HEK293 (cell line): ENCODE measurements at regions of chr11 and their contacts with region 1.

Region 1: DNA sequence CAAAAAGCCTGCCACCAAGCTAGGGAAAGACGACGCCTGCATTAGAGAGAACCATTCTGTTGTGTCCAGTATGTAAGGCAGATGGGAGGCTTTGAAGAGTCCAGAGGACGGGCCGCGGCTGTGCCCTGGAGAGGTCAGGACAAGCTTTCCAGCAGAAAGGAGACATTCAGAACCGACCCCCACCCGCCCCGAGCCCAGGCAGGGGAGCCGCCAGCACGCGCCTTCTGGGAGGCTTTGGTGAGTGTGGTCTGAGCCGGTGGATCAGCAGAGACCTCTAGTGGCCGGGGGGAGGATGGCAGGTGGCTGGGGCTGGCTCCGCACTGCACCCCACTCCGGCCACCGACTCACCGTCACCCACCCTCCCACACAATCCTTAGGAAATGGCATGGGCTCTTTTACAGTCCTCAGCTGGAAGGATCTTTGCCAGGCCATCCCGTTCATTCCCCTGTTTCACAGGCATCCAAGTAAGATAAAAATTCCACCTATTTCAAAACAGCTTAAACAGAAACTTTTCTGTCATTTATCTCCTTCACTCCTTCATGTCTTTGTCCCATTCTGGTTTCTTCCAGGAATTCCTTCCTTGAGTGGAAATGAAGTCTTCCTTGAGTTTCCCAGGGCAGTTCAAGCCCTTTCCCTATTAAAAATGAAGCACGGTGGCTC is 91.2 kb downstream of the FEZ1 start:
- H3K4me3 ChIP-seq: no peak overlapping the region
- H3K27ac ChIP-seq: no peak overlapping the region
- H3K4me1 ChIP-seq: no peaks in the 10 kb centered on the region
- CTCF ChIP-seq: peak; percentile 61

Region 2: DNA sequence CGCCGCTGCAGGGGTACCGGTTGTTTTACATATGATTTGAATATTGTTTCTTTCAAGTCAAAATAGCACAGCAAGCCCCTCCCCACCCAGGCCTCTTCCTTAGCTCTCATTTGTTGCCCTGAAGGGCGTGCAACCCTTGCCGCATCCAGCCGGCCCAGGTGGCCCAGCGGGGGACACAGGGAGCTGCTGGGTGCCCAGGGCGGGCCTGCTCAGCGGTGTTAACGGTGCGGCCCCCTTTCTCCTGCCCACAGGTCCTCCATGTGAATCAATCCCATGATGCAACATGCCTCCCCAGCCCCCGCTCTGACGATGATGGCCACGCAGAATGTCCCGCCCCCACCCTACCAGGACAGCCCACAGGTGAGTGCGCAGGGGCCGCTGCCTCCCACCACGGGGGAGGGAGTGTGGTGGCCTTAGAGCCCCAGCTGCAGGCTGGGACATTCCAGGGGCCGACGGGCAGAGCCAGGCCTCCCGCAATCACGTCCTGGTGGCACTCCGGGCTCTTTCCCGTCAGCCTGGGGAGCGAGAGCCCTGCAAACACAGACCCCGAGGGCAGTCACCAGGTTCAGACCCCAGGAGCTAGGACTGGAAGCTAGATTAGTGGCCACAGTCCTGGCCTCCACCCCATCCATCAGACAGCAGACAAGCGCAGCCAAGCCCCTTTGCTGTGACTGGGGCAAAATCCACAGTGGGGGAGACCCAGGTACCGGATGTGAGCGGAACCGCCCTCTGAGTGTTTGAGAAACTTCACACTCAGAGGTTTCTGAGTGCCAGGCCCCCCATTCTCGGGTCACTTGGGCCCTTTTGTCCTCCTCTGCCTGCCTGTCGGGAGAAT is 53.7 kb before region 1 on chr11:
- CTCF ChIA-PET with region 1: interaction called, 20 read pairs
- POLR2A ChIA-PET with region 1: no interaction called
- H3K4me3 ChIP-seq: no peak overlapping the region
- H3K27ac ChIP-seq: no peak overlapping the region
- H3K4me1 ChIP-seq: no peaks in the 10 kb centered on the region
- CTCF ChIP-seq: no peak

Region 3: GRCh38 chr11:125390946-125391345 is 14.0 kb before region 1 on chr11:
- CTCF ChIA-PET with region 1: interaction called, 11 read pairs
- POLR2A ChIA-PET with region 1: no interaction called
- H3K4me3 ChIP-seq: no peak overlapping the region
- H3K27ac ChIP-seq: no peak overlapping the region
- H3K4me1 ChIP-seq: no peaks in the 10 kb centered on the region
- CTCF ChIP-seq: no peak